ENCODE measurements at regions of chr7 and their contacts with region 1.

Region 1: GRCh38 chr7:37065779-37066271 is 341.5 kb upstream of the AOAH start:
- DNase-seq: no peak
- H3K4me3 Mint-ChIP-seq: no peak overlapping the region
- H3K27ac Mint-ChIP-seq: peak overlapping the region; percentile 86
- H3K4me1 Mint-ChIP-seq: peaks cover 50% of the 10 kb centered on the region
- H3K27me3 Mint-ChIP-seq: no peaks in the 10 kb centered on the region

Region 2: GRCh38 chr7:36958111-36958733 is 107.6 kb before region 1 on chr7:
- intact Hi-C with region 1: loop called (anchors 5 kb)
- DNase-seq: no peak
- H3K4me3 Mint-ChIP-seq: no peak overlapping the region
- H3K27ac Mint-ChIP-seq: no peak overlapping the region
- H3K4me1 Mint-ChIP-seq: peaks cover 28% of the 10 kb centered on the region
- H3K27me3 Mint-ChIP-seq: no peaks in the 10 kb centered on the region

Region 3: GRCh38 chr7:37016064-37016878 is 49.6 kb before region 1 on chr7:
- intact Hi-C with region 1: no loop called
- DNase-seq: no peak
- H3K4me3 Mint-ChIP-seq: no peak overlapping the region
- H3K27ac Mint-ChIP-seq: no peak overlapping the region
- H3K4me1 Mint-ChIP-seq: peaks cover 4% of the 10 kb centered on the region
- H3K27me3 Mint-ChIP-seq: no peaks in the 10 kb centered on the region

Region 4: GRCh38 chr7:37031571-37032257 is 34.1 kb before region 1 on chr7:
- intact Hi-C with region 1: loop called (anchors 2 kb)
- DNase-seq: no peak
- H3K4me3 Mint-ChIP-seq: no peak overlapping the region
- H3K27ac Mint-ChIP-seq: peak overlapping the region; percentile 66
- H3K4me1 Mint-ChIP-seq: peaks cover 50% of the 10 kb centered on the region
- H3K27me3 Mint-ChIP-seq: no peaks in the 10 kb centered on the region

Region 5: GRCh38 chr7:37083311-37084096 is 17.7 kb after region 1 on chr7:
- intact Hi-C with region 1: no loop called
- DNase-seq: no peak
- H3K4me3 Mint-ChIP-seq: no peak overlapping the region
- H3K27ac Mint-ChIP-seq: no peak overlapping the region
- H3K4me1 Mint-ChIP-seq: peaks cover 21% of the 10 kb centered on the region
- H3K27me3 Mint-ChIP-seq: no peaks in the 10 kb centered on the region

Region 6: DNA sequence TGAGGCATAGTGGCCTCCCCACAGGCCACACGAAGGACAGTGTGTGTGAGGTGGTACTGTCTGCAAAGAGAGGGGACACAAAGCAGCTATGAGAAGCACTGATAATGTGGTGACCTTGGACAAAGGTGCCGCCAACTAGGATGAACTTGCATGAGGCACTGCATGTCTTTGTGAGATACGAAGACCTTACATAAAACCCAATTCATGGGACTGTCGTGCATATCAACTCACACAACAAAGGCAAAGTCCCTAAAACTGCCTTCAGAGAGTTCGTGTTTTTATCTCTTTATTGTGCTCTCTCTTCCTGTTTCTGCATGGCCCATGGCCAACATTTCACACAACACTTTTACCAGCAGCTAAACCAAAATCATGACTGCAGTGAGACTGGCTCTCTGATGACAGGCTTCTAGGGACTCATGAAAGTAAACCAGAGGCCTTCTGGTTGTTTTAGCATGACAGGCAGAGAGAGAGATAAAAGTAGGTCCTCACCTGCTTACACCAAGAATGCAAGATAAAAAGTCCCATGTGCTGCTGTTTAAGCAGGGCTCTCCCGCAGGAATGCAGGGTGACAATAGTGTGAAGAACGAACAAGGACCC is 35.0 kb after region 1 on chr7:
- intact Hi-C with region 1: no loop called
- DNase-seq: no peak
- H3K4me3 Mint-ChIP-seq: no peak overlapping the region
- H3K27ac Mint-ChIP-seq: peak overlapping the region; percentile 36
- H3K4me1 Mint-ChIP-seq: peaks cover 17% of the 10 kb centered on the region
- H3K27me3 Mint-ChIP-seq: no peaks in the 10 kb centered on the region